Activated CD4-positive, alpha-beta T cell treated with anti-CD3 and anti-CD28 coated beads for 36 hours (primary cell): ENCODE measurements at regions of chr1 and their contacts with region 1.

Region 1: DNA sequence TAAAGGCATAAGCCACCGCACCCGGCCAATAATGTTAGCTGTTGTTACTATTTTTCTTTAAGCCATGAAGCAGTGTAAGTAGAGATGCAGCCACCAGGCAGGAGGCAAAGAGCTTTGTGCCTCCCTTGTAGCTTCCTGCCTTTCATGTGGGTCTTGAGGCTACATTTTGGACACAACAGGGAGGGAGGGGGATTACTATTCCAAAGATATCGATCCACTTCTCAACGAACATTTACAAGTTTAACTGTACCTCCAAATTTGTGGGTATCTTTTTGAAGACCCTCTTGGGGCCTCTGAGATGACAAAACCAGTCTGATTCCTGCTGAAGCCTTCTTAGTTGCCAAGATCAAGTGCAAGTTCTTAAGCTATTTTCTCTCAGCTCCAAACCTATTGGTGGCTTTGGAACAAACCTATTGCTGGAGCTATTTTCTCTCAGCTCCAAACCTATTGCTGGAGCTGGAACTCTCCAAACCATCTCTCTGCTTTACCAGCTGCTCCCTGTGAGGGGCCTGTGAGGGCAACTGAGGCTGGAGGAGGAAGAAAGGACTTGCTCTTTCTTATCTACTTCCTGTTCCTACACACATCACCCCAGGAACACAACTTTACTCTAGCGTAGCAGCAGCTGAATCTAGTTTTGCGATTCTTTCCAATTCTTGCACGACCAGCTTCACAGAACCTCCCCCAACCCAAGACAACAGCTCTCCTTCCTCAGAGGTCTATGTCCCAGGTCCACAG is 16.1 kb upstream of the RCAN3 start:
- DNase-seq: peak; percentile 36
- ATAC-seq: no peak
- H3K4me3 Mint-ChIP-seq: peak overlapping the region; percentile 61
- H3K27ac Mint-ChIP-seq: peak overlapping the region; percentile 91
- H3K4me1 Mint-ChIP-seq: peaks cover 79% of the 10 kb centered on the region
- H3K27me3 Mint-ChIP-seq: no peaks in the 10 kb centered on the region

Region 2: GRCh38 chr1:24102961-24103360 is 383.5 kb before region 1 on chr1:
- CTCF ChIA-PET with region 1: no interaction called
- POLR2A ChIA-PET with region 1: no interaction called
- intact Hi-C with region 1: no loop called
- DNase-seq: no peak
- ATAC-seq: no peak
- H3K4me3 Mint-ChIP-seq: no peak overlapping the region
- H3K27ac Mint-ChIP-seq: no peak overlapping the region
- H3K4me1 Mint-ChIP-seq: no peaks in the 10 kb centered on the region
- H3K27me3 Mint-ChIP-seq: no peaks in the 10 kb centered on the region

Region 3: DNA sequence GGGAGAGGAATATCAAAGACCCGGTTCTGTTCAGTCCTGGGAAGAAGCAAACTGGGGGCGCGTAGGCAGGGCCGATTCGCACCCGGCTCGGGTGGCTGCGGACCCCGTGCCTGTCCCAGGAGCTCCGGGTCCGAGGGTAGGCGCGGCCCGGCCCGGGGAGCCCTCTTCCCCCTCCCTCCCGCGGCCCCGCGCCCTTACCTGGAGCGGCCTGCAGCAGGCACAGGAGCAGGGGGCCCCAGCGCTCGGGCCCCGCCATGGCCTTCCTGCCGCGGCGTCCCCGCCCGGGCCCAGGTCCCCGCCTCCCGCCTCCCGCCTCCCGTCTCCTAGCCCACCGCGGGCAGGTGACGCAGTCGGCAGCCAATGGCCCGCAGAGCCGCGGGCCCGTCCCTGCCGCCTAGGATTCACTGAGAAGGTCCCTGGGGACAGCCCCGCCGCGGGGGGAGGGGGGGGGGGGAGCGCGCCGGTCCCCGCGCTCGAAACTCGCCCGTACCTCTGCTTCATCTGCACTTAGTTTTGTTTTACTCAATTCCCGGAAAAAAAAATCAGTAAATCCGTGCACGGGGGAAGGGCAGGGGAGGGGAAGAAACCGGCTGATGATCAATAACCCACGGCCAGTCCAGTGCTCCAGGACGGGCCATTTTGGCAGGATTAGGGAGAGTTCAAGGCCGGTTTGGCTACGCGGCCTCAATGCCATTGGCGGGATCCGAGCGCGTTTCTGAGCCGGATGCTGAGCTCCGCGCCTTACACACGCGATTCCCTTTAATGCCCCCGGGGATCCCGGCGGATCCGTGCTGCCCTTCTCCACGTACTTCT is 299.3 kb before region 1 on chr1 and contains the start of gene IFNLR1:
- CTCF ChIA-PET with region 1: interaction called, 6 read pairs
- POLR2A ChIA-PET with region 1: interaction called, 3 read pairs
- intact Hi-C with region 1: loop called in 1 of 2 experiments (anchors 5 kb)
- DNase-seq: peak; percentile 93
- ATAC-seq: peak; percentile 88
- H3K4me3 Mint-ChIP-seq: peak within 1 kb of the TSS; percentile 73
- H3K27ac Mint-ChIP-seq: peak within 1 kb of the TSS; percentile 71
- H3K4me1 Mint-ChIP-seq: peaks cover 47% of the 10 kb centered on the region
- H3K27me3 Mint-ChIP-seq: no peaks in the 10 kb centered on the region
- total RNA-seq, gene IFNLR1: 6.6 to 7.4 TPM